Endothelial cell of umbilical vein (primary cell): ENCODE measurements at regions of chr22 and their contacts with region 1.

Region 1: DNA sequence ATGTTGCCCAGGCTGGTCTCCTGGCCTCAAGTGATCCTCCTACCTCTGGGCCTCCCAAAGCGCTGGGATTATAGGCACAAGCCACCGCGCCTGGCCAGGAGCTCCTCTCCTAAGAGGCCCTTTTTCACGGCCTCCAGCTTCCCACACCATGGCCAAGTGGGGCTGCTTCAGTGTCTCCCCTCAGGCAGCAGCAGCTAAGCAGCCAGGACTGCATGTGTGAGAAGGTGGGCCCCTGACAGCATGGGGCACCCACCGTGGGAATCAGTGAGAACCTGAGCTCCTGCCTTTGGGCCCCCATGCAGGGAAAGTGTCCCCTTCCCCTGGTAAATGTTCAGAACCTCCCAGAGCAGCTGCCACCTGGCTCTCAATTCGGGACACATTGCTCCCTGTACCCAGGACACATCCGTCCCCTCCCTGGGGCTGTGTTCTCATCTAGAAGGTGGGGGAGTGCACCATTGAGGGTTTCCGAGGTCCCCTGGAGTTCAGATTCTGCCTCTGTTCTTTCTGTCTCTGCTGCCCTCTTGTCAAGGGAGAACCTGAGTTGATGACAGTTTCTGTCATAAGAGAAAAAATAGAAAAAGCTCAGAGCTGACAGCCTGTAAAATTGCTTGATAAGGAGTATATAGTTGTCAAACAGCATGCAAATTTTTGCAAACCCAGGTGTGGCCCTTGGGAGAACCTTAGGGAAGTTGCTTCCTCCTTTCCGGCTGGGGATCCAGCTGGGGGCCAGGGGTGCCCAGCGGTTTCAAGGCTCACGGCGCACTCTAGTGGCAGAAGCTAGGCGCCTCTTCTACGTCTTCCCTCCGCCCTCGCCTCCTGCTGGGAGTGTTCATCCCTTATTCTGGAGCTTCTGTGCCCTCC is 29.7 kb downstream of the FAM83F start:
- DNase-seq: peak; percentile 39
- H3K4me3 ChIP-seq: no peak overlapping the region
- H3K27ac ChIP-seq: no peak overlapping the region
- H3K4me1 ChIP-seq: no peaks in the 10 kb centered on the region
- H3K27me3 ChIP-seq: no peaks in the 10 kb centered on the region
- CTCF ChIP-seq: peak; percentile 76 to 96
- POLR2A ChIP-seq: no peak

Region 2: DNA sequence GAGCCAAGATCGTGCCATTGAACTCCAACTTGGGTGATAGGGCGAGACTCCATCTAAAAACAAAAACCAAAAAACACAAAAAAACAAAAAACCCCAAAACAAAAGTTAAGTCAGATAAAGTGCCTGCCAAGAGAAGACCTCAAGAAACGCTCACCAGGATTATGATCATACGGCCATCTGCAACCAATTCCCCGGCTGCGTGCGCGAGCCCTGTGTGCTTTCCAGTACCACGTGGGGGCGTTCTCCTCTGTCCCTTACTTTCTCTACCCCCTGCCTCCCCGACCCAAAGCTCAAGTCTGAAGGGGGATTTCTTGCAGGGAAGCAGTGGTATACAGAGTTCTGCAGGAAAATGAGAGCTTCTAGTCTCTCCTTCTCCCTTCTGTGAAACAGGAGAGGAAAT is 481.3 kb before region 1 on chr22:
- CTCF ChIA-PET with region 1: interaction called, 51 read pairs
- POLR2A ChIA-PET with region 1: interaction called, 3 read pairs
- dilution Hi-C with region 1: no loop called
- intact Hi-C with region 1: loop called (anchors 2 kb)
- DNase-seq: no peak
- H3K4me3 ChIP-seq: no peak overlapping the region
- H3K27ac ChIP-seq: no peak overlapping the region
- H3K4me1 ChIP-seq: no peaks in the 10 kb centered on the region
- H3K27me3 ChIP-seq: no peaks in the 10 kb centered on the region
- CTCF ChIP-seq: peak; percentile 39 to 68
- POLR2A ChIP-seq: no peak

Region 3: GRCh38 chr22:39808081-39808480 is 216.3 kb before region 1 on chr22:
- CTCF ChIA-PET with region 1: interaction called, 11 read pairs
- POLR2A ChIA-PET with region 1: no interaction called
- dilution Hi-C with region 1: no loop called
- intact Hi-C with region 1: loop called (anchors 10 kb)
- DNase-seq: peak; percentile 28
- H3K4me3 ChIP-seq: no peak overlapping the region
- H3K27ac ChIP-seq: no peak overlapping the region
- H3K4me1 ChIP-seq: no peaks in the 10 kb centered on the region
- H3K27me3 ChIP-seq: peaks cover 14 to 16% of the 10 kb centered on the region in 2 experiments
- CTCF ChIP-seq: peak; percentile 61 to 64
- POLR2A ChIP-seq: no peak

Region 4: GRCh38 chr22:39839917-39840510 is 184.4 kb before region 1 on chr22:
- CTCF ChIA-PET with region 1: no interaction called
- POLR2A ChIA-PET with region 1: no interaction called
- dilution Hi-C with region 1: no loop called
- intact Hi-C with region 1: no loop called
- DNase-seq: no peak
- H3K4me3 ChIP-seq: no peak overlapping the region
- H3K27ac ChIP-seq: no peak overlapping the region
- H3K4me1 ChIP-seq: no peaks in the 10 kb centered on the region
- H3K27me3 ChIP-seq: peaks cover 2 to 19% of the 10 kb centered on the region in 2 experiments
- CTCF ChIP-seq: no peak
- POLR2A ChIP-seq: no peak

Region 5: DNA sequence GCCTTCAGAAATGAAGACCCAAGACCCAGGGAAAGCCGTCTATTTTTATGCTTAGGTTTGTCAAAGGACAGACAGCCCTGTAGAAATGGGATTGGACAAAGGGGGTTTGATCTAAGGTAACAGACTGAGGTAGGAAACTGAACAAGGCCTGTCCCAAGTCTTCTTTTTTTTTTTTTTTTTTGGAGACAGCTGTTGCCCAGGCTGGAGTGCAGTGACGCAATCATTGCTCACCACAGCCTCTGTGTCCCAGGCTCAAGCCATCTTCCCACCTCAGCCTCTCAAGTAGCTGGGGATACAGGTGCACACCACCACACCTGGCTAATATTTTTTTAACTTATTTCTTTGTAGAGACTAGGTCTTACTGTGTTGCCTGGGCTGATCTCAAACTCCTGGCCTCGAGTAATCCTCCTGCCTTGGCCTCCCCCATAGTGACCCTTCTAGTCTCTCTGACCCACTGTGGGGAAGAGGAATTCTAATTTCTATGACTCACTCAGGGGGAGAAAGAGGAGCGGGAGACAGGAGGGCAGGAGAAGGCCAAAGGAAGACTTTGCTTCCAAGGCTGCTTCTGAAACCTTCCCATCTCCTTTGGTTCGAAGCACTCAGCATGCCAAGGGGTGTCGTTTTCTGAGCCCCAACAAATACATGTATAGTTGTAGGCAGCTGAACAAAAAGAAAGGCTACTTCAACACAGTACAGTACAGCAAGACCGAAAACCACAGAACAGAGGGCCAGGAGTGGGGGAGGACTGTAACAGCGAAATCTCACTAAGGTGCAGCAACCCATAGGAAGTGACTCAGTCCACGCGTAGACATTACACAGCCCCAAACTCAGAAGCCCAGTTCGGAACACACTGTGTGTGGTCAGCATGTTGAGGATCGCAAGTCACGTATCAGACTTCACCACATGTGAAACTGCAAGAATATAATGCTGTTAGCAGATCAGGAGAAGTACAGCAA is 63.4 kb before region 1 on chr22:
- CTCF ChIA-PET with region 1: interaction called, 10 read pairs
- POLR2A ChIA-PET with region 1: no interaction called
- dilution Hi-C with region 1: no loop called
- intact Hi-C with region 1: loop called (anchors 2 kb)
- DNase-seq: no peak
- H3K4me3 ChIP-seq: no peak overlapping the region
- H3K27ac ChIP-seq: no peak overlapping the region
- H3K4me1 ChIP-seq: peaks cover 3% of the 10 kb centered on the region
- H3K27me3 ChIP-seq: peaks cover under 1 to 2% of the 10 kb centered on the region in 2 experiments
- CTCF ChIP-seq: no peak
- POLR2A ChIP-seq: no peak

Region 6: GRCh38 chr22:40036591-40037225 is 12.3 kb after region 1 on chr22:
- CTCF ChIA-PET with region 1: interaction called, 43 read pairs
- POLR2A ChIA-PET with region 1: no interaction called
- dilution Hi-C with region 1: no loop called
- intact Hi-C with region 1: no loop called
- DNase-seq: peak; percentile 69
- H3K4me3 ChIP-seq: no peak overlapping the region
- H3K27ac ChIP-seq: no peak overlapping the region
- H3K4me1 ChIP-seq: peaks cover 11% of the 10 kb centered on the region
- H3K27me3 ChIP-seq: peaks cover 3 to 24% of the 10 kb centered on the region in 2 experiments
- CTCF ChIP-seq: peak; percentile 62 to 84
- POLR2A ChIP-seq: no peak